ENCODE measurements at regions of chr1 and their contacts with region 1.

Region 1: DNA sequence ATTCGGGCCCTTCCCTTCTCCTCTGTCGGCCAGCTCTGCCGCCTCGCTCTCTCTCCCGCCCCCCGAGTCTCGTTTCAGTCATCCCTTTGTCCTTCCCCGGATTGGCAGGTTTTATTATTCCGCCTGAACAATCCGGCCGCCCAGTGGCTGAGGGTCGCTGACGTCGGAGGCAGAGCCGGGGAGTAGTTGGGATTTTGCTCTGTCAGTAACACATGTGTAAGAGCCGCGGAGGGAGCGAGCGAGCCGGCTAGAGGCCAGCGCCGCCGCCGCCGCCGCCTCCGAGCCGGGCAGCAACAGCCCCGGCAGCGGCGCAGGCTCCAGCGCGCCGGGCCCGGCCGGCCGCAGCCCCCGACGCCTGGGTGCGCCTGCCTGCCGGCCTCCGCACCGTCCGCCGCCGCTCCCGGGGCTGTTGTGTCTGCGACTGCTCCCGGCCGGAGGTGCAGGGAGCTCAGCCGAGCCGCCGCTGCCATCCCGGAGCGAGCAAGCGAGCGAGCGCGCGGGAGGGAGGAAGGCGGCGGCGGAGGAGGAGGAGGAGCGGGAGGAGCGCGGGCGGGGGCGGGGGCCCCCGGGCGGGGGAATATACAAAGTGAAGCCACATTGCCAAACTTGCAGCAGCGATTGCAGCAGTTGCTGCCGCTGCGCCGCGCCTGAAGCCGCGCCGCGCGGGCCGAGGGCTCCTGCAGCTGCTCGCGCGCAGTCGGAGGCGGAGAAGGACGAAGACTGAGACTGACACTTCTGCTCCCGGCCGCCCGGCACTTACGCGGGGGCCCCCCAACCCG is at the start of gene LMO4:
- DNase-seq: peak; percentile 80 to 91 (median 82)
- H3K4me3 ChIP-seq: peak within 1 kb of the TSS; percentile 55 to 71
- H3K4me3 Mint-ChIP-seq: peak within 1 kb of the TSS; percentile 96 to 98 (median 97)
- H3K27ac ChIP-seq: peak within 1 kb of the TSS; percentile 69
- H3K27ac Mint-ChIP-seq: peak within 1 kb of the TSS; percentile 91 to 98 (median 95)
- H3K4me1 ChIP-seq: peaks cover 32% of the 10 kb centered on the region
- H3K4me1 Mint-ChIP-seq: peaks cover 26 to 51% (median 36%) of the 10 kb centered on the region in 4 donors
- H3K27me3 ChIP-seq: no peaks in the 10 kb centered on the region
- H3K27me3 Mint-ChIP-seq: peaks cover 0 to 1% of the 10 kb centered on the region in 2 donors
- total RNA-seq, gene LMO4: 25.0 TPM

Region 2: GRCh38 chr1:86395771-86396497 is 932.5 kb before region 1 on chr1 and contains the start of gene ODF2L:
- CTCF ChIA-PET with region 1: no interaction called
- POLR2A ChIA-PET with region 1: interaction called, 3 read pairs
- intact Hi-C with region 1: loop called (anchors 5 kb)
- DNase-seq: peak; percentile 90 to 94 (median 92)
- H3K4me3 ChIP-seq: peak within 1 kb of the TSS; percentile 77 to 87
- H3K4me3 Mint-ChIP-seq: peak within 1 kb of the TSS; percentile 94 to 99 (median 98)
- H3K27ac ChIP-seq: peak within 1 kb of the TSS; percentile 92
- H3K27ac Mint-ChIP-seq: peak within 1 kb of the TSS; percentile 97 to 100 (median 99)
- H3K4me1 ChIP-seq: peaks cover 56% of the 10 kb centered on the region
- H3K4me1 Mint-ChIP-seq: peaks cover 43 to 68% (median 51%) of the 10 kb centered on the region in 4 donors
- H3K27me3 ChIP-seq: no peaks in the 10 kb centered on the region
- H3K27me3 Mint-ChIP-seq: no peaks in the 10 kb centered on the region
- total RNA-seq, gene ODF2L: 97.3 to 98.3 TPM

Region 3: GRCh38 chr1:87292684-87293493 is 35.6 kb before region 1 on chr1:
- CTCF ChIA-PET with region 1: interaction called, 10 read pairs
- POLR2A ChIA-PET with region 1: no interaction called
- intact Hi-C with region 1: loop called (anchors 1 kb)
- DNase-seq: peak; percentile 42 to 62 (median 52)
- H3K4me3 ChIP-seq: no peak overlapping the region
- H3K4me3 Mint-ChIP-seq: no peak overlapping the region
- H3K27ac ChIP-seq: no peak overlapping the region
- H3K27ac Mint-ChIP-seq: no peak overlapping the region
- H3K4me1 ChIP-seq: no peaks in the 10 kb centered on the region
- H3K4me1 Mint-ChIP-seq: no peaks in the 10 kb centered on the region
- H3K27me3 ChIP-seq: no peaks in the 10 kb centered on the region
- H3K27me3 Mint-ChIP-seq: peaks cover 0 to 10% of the 10 kb centered on the region in 2 donors

Region 4: DNA sequence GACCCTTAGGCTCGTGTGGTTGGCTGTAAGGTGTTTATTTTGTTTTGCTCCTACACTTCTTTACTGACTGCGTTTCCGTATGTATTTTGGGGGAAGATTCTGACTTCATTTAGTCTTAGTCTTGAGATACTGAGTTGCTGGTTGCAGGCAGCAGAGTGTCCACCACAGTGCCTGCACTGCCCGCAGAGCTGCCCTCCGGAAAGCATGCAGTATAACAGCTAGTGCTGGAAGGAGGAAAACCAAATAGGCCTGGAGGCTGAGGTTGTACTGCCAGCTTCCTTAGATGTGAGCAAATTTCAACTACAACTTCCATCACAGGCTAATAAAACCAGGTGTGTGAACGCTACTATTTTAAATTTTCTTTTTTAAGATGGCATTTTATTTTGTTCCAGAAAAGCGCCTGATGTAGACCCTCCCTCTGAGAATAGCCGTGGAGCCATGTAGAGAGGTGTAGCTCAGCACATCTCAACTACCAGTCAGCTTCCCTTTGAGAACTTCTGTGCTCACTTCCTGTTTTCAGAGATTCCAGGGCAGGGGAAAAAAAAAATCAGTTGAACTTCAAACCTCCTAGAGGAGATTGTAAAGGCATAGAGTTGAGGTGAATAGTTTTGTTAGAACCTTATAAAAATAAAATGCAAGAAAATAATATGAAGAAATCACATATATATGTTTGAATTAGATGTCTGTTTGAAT is 17.8 kb after region 1 on chr1:
- CTCF ChIA-PET with region 1: interaction called, 17 read pairs
- POLR2A ChIA-PET with region 1: interaction called, 8 read pairs
- intact Hi-C with region 1: no loop called
- DNase-seq: no peak
- H3K4me3 ChIP-seq: no peak overlapping the region
- H3K4me3 Mint-ChIP-seq: no peak overlapping the region
- H3K27ac ChIP-seq: no peak overlapping the region
- H3K27ac Mint-ChIP-seq: peak overlapping the region in 1 of 7 donors; percentile 63
- H3K4me1 ChIP-seq: no peaks in the 10 kb centered on the region
- H3K4me1 Mint-ChIP-seq: peaks cover 0 to 4% (median under 1%) of the 10 kb centered on the region in 4 donors
- H3K27me3 ChIP-seq: no peaks in the 10 kb centered on the region
- H3K27me3 Mint-ChIP-seq: no peaks in the 10 kb centered on the region

Region 5: DNA sequence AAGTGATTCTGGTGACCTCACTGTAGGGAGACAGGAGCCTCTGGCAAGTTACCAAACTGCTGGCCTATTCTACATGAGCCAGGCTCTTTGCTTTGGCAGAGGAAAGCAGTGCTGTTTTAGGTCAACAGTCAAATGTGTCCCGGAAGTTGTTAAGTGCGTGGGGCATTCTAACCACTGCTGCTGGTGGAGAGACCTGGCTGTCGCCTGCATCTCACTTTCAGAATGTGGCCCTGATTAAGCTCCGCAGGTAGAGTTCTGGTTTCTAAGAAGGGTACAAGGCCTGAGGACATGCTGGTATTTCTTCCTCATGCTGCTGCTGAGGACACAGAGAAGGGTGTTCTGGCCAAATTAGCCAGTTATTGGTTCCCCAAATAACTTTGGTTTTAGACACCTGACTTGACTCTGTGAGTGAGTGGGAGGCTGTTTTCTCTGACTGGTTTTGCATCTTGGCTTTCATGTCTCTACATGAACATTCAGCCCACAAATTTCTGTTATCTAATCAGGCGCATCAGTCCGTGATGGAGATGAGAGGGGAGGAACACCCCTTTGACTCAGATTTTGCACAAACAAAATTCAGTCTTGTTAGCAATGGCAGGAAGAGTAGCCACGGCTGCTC is 121.0 kb after region 1 on chr1:
- CTCF ChIA-PET with region 1: interaction called, 31 read pairs
- POLR2A ChIA-PET with region 1: interaction called, 42 read pairs
- intact Hi-C with region 1: loop called (anchors 1 kb)
- DNase-seq: peak; percentile 41 to 56 (median 51)
- H3K4me3 ChIP-seq: no peak overlapping the region
- H3K4me3 Mint-ChIP-seq: peak overlapping the region; percentile 45 to 89 (median 79)
- H3K27ac ChIP-seq: no peak overlapping the region
- H3K27ac Mint-ChIP-seq: peak overlapping the region; percentile 78 to 95 (median 93)
- H3K4me1 ChIP-seq: peaks cover 18% of the 10 kb centered on the region
- H3K4me1 Mint-ChIP-seq: peaks cover 13 to 35% (median 28%) of the 10 kb centered on the region in 4 donors
- H3K27me3 ChIP-seq: no peaks in the 10 kb centered on the region
- H3K27me3 Mint-ChIP-seq: no peaks in the 10 kb centered on the region

Region 6: GRCh38 chr1:87953732-87954344 is 625.4 kb after region 1 on chr1:
- CTCF ChIA-PET with region 1: interaction called, 48 read pairs
- POLR2A ChIA-PET with region 1: interaction called, 3 read pairs
- intact Hi-C with region 1: no loop called
- DNase-seq: peak in 4 of 5 donors; percentile 49 to 55 (median 51)
- H3K4me3 ChIP-seq: no peak overlapping the region
- H3K4me3 Mint-ChIP-seq: no peak overlapping the region
- H3K27ac ChIP-seq: no peak overlapping the region
- H3K27ac Mint-ChIP-seq: no peak overlapping the region
- H3K4me1 ChIP-seq: no peaks in the 10 kb centered on the region
- H3K4me1 Mint-ChIP-seq: no peaks in the 10 kb centered on the region
- H3K27me3 ChIP-seq: no peaks in the 10 kb centered on the region
- H3K27me3 Mint-ChIP-seq: peaks cover 13 to 20% of the 10 kb centered on the region in 2 donors

Measured in CD4-positive, alpha-beta memory T cell (primary cell).